Caco-2 (cell line): ENCODE measurements at regions of chr11 and their contacts with region 1.

Region 1: DNA sequence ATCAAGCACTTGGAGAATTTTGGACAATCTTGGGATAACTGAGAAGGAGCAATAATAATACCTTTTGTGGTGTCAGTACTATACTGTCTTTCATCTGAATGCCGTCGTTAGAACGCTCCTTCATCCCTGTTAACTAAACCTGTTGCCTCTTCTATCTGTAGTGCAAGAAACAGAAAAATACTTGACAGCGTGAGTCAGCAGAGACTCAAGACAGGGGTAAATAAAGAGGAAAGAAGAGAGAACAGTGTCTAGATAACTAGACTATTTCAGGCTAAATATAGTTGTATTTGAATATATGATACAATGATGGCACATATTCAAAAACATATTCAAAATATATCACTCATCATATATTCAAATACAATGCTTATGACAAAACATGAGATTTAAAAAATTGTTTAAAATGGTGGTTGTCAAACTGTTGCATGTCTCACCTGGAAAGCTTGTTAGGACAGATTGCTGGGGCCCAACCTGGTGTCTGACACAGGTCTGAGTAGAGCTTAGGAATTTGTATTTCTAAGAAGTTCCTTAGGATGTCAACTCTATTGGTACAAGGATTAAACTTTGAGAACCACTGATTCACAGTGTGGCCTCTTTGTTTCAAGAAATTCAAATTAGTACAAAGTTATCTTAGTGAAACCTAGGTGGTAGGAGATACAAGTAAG is 17.4 kb downstream of the OOSP4A start:
- DNase-seq: no peak
- H3K4me3 ChIP-seq: no peak overlapping the region
- H3K4me3 Mint-ChIP-seq: no peak overlapping the region
- H3K27ac Mint-ChIP-seq: no peak overlapping the region
- H3K4me1 ChIP-seq: no peaks in the 10 kb centered on the region
- H3K4me1 Mint-ChIP-seq: peaks cover 7% of the 10 kb centered on the region
- H3K27me3 ChIP-seq: no peaks in the 10 kb centered on the region
- H3K27me3 Mint-ChIP-seq: peaks cover 2% of the 10 kb centered on the region
- CTCF ChIP-seq: no peak

Region 2: GRCh38 chr11:60040109-60040508 is 58.9 kb after region 1 on chr11 and contains the start of gene OOSP2:
- CTCF ChIA-PET with region 1: no interaction called
- POLR2A ChIA-PET with region 1: no interaction called
- intact Hi-C with region 1: loop called (anchors 10 kb)
- DNase-seq: no peak
- H3K4me3 ChIP-seq: no peak within 1 kb of the TSS
- H3K4me3 Mint-ChIP-seq: no peak within 1 kb of the TSS
- H3K27ac Mint-ChIP-seq: no peak within 1 kb of the TSS
- H3K4me1 ChIP-seq: no peaks in the 10 kb centered on the region
- H3K4me1 Mint-ChIP-seq: no peaks in the 10 kb centered on the region
- H3K27me3 ChIP-seq: no peaks in the 10 kb centered on the region
- H3K27me3 Mint-ChIP-seq: peaks cover 8% of the 10 kb centered on the region
- CTCF ChIP-seq: no peak
- total RNA-seq, gene OOSP2: not detected in 2 replicates